A673 (cell line): ENCODE measurements at regions of chr4 and their contacts with region 1.

Region 1: GRCh38 chr4:153221783-153222706 is 17.8 kb downstream of the TRIM2 start:
- DNase-seq: peak; percentile 93
- H3K4me3 ChIP-seq: peak overlapping the region; percentile 66
- H3K27ac ChIP-seq: peak overlapping the region; percentile 92
- H3K4me1 ChIP-seq: peaks cover 24% of the 10 kb centered on the region
- H3K27me3 ChIP-seq: no peaks in the 10 kb centered on the region
- CTCF ChIP-seq: no peak

Region 2: GRCh38 chr4:153257151-153257620 is 35.1 kb after region 1 on chr4:
- CTCF ChIA-PET with region 1: no interaction called
- POLR2A ChIA-PET with region 1: interaction called, 3 read pairs
- intact Hi-C with region 1: loop called (anchors 2 kb)
- DNase-seq: peak; percentile 89
- H3K4me3 ChIP-seq: peak overlapping the region; percentile 43
- H3K27ac ChIP-seq: peak overlapping the region; percentile 84
- H3K4me1 ChIP-seq: peaks cover 60% of the 10 kb centered on the region
- H3K27me3 ChIP-seq: no peaks in the 10 kb centered on the region
- CTCF ChIP-seq: no peak

Region 3: GRCh38 chr4:153318696-153319320 is 96.8 kb after region 1 on chr4:
- CTCF ChIA-PET with region 1: no interaction called
- POLR2A ChIA-PET with region 1: no interaction called
- intact Hi-C with region 1: loop called (anchors 5 kb)
- DNase-seq: peak; percentile 82
- H3K4me3 ChIP-seq: no peak overlapping the region
- H3K27ac ChIP-seq: no peak overlapping the region
- H3K4me1 ChIP-seq: no peaks in the 10 kb centered on the region
- H3K27me3 ChIP-seq: no peaks in the 10 kb centered on the region
- CTCF ChIP-seq: peak; percentile 81